ENCODE measurements at regions of chr5 and their contacts with region 1.

Region 1: GRCh38 chr5:173781814-173782670 is 106.1 kb upstream of the CPEB4 start:
- DNase-seq: peak; percentile 32
- ATAC-seq: peak; percentile 21
- H3K4me3 ChIP-seq: no peak overlapping the region
- H3K27ac ChIP-seq: 0 out of 2 replicates have a peak overlapping the region, but pooled peaks have one; percentile 4
- H3K4me1 ChIP-seq: peaks cover 36% of the 10 kb centered on the region
- H3K27me3 ChIP-seq: no peaks in the 10 kb centered on the region
- CTCF ChIP-seq: no peak
- EP300 ChIP-seq: no peak
- POLR2A ChIP-seq: no peak
- RAD21 ChIP-seq: no peak

Region 2: DNA sequence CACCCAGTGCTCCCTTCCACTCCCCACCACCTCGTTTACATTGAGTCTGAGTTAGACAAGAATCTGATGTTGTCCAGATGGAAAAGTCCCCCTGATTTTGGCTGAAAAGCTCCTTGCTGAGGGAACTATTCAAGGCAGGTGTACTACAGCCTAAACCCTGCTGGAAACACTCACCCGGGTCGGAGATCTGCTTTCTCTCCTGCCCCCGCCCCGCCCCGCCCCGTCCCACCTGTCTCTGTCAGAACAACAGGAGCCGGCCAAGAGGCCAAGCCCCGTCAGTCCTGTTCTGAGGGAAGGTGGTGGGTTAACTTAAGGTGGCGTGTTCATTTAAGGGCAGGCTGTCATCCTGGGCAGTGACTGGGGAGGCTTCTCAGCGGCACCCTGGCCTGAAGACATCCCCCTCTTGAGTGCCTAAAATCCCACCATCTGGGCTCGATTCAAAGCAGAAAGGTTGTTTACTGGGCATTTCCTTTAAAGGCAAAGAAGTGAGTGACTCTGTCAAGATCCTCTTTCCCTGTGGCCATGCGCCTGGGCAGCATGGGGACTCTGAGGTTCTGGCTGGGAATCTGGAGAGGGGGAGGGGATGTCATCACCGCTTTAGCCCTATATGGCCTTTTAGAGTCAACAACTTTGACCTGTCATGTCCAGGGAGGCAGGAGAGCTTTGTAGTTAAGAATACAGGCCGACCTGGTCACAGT is 1212.0 kb before region 1 on chr5:
- CTCF ChIA-PET with region 1: no interaction called
- POLR2A ChIA-PET with region 1: no interaction called
- RAD21 ChIA-PET with region 1: no interaction called
- SMC1A ChIA-PET with region 1: no interaction called
- in situ Hi-C with region 1: no loop called
- intact Hi-C with region 1: no loop called
- DNase-seq: no peak
- ATAC-seq: no peak
- H3K4me3 ChIP-seq: no peak overlapping the region
- H3K27ac ChIP-seq: no peak overlapping the region
- H3K4me1 ChIP-seq: no peaks in the 10 kb centered on the region
- H3K27me3 ChIP-seq: peaks cover 2 to 3% of the 10 kb centered on the region in 2 experiments; a peak in 3 of 4 replicates
- CTCF ChIP-seq: no peak
- EP300 ChIP-seq: no peak
- POLR2A ChIP-seq: no peak
- RAD21 ChIP-seq: no peak

Region 3: DNA sequence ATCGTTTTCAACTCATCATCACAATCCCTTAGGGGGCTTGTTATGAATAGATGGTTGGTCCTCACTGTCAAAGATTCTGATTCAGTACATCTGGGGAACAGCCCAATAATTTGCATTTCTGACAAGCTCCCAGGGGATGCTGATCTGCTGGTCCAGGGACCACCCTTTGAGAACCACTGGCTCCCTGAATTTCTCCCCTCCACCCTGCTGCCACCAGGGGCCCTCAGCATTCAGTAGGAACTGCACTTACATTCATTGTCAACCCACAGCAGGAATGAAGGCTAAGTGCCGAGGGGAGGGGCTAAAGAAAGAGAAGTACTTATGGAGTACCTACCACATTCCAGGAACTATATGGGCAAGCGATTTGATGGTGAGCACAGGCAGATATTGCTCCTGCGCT is 251.5 kb before region 1 on chr5:
- CTCF ChIA-PET with region 1: no interaction called
- POLR2A ChIA-PET with region 1: no interaction called
- RAD21 ChIA-PET with region 1: no interaction called
- SMC1A ChIA-PET with region 1: no interaction called
- in situ Hi-C with region 1: no loop called
- intact Hi-C with region 1: no loop called
- DNase-seq: no peak
- ATAC-seq: peak; percentile 29; the same call in 1 of the 3 replicates
- H3K4me3 ChIP-seq: no peak overlapping the region
- H3K27ac ChIP-seq: no peak overlapping the region
- H3K4me1 ChIP-seq: no peaks in the 10 kb centered on the region; the same call in 1 of the 2 replicates
- H3K27me3 ChIP-seq: no peaks in the 10 kb centered on the region
- CTCF ChIP-seq: peak; percentile 7 to 34 (median 26); a peak in 2 of 6 replicates
- EP300 ChIP-seq: no peak
- POLR2A ChIP-seq: no peak
- RAD21 ChIP-seq: peak; percentile 32

Region 4: DNA sequence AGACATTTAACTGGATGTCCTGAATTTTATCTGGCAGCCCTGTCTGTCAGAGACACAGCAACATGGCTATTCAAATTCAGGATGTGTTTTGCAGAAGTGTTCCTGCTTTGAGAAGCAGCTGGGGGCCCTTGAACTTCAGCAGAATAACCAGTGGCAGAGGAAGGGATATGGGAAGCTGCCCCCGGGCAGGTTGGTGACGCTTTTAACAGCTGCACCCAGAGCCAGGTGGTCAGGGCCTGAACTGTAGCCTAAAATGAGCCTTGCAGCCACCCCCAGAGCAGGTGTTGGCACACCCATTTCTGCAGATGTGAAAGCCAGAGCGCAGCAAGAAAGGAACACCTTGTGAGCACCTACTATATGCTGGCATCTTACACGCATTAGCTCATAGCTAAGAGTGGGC is 36.9 kb before region 1 on chr5:
- CTCF ChIA-PET with region 1: interaction called, 29 read pairs
- POLR2A ChIA-PET with region 1: interaction called, 14 read pairs
- RAD21 ChIA-PET with region 1: interaction called, 45 read pairs
- SMC1A ChIA-PET with region 1: interaction called, 60 read pairs
- in situ Hi-C with region 1: no loop called
- intact Hi-C with region 1: loop called (anchors 2 kb)
- DNase-seq: peak; percentile 47
- ATAC-seq: peak; percentile 64
- H3K4me3 ChIP-seq: no peak overlapping the region
- H3K27ac ChIP-seq: peak overlapping the region; percentile 95
- H3K4me1 ChIP-seq: peaks cover 54% of the 10 kb centered on the region
- H3K27me3 ChIP-seq: no peaks in the 10 kb centered on the region
- CTCF ChIP-seq: no peak
- EP300 ChIP-seq: no peak; a peak in 1 of 4 replicates
- POLR2A ChIP-seq: no peak
- RAD21 ChIP-seq: 0 out of 2 replicates have a peak, but pooled peaks have one; percentile 0